Activated CD4-positive, alpha-beta T cell treated with anti-CD3 and anti-CD28 coated beads, Interleukin-2, amount 10 ng/mL, durations not matched to agents 24 days and 14 days (primary cell): ENCODE measurements at regions of chr14 and their contacts with region 1.

Region 1: GRCh38 chr14:21263656-21264411 is 5.4 kb downstream of the HNRNPC start:
- DNase-seq: peak; percentile 64
- H3K4me3 Mint-ChIP-seq: peak overlapping the region; percentile 92
- H3K27ac Mint-ChIP-seq: peak overlapping the region; percentile 97
- H3K4me1 Mint-ChIP-seq: peaks cover 58% of the 10 kb centered on the region
- H3K27me3 Mint-ChIP-seq: no peaks in the 10 kb centered on the region

Region 2: GRCh38 chr14:21220874-21221477 is 42.9 kb before region 1 on chr14:
- intact Hi-C with region 1: loop called (anchors 5 kb)
- DNase-seq: no peak
- H3K4me3 Mint-ChIP-seq: peak overlapping the region; percentile 32
- H3K27ac Mint-ChIP-seq: peak overlapping the region; percentile 89
- H3K4me1 Mint-ChIP-seq: peaks cover 43% of the 10 kb centered on the region
- H3K27me3 Mint-ChIP-seq: no peaks in the 10 kb centered on the region

Region 3: GRCh38 chr14:21326972-21327371 is 63.1 kb after region 1 on chr14:
- intact Hi-C with region 1: no loop called
- DNase-seq: no peak
- H3K4me3 Mint-ChIP-seq: no peak overlapping the region
- H3K27ac Mint-ChIP-seq: no peak overlapping the region
- H3K4me1 Mint-ChIP-seq: no peaks in the 10 kb centered on the region
- H3K27me3 Mint-ChIP-seq: peaks cover 8% of the 10 kb centered on the region